Naive thymus-derived CD4-positive, alpha-beta T cell (primary cell): ENCODE measurements at regions of chr2 and their contacts with region 1.

Region 1: DNA sequence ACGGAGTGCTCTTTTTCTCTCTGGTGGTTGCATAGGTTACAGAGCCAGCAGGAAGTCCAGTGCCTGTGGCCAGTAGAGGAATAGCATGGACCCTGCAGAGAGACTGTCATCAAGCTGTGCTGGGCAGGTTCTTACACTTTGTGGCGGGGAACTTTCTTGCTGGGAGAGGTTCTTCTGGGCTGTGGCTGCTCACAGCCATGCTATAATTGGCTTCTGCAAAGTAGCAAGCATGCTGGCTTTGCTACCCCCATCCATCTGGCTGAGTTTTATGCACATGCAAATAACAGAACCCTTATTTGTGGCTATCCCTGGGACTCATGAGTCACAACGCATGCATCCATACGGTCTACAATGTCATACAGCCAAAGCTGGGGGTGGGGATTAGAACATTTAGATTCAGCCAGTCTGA is 68.9 kb downstream of the PLCL1 start:
- DNase-seq: no peak
- ATAC-seq: no peak
- H3K4me3 ChIP-seq: no peak overlapping the region
- H3K4me3 Mint-ChIP-seq: peak overlapping the region in 1 of 10 donors; percentile 33
- H3K27ac ChIP-seq: no peak overlapping the region
- H3K27ac Mint-ChIP-seq: peak overlapping the region in 3 of 9 donors; percentile 28 to 62 (median 47)
- H3K4me1 ChIP-seq: peaks cover 0 to 34% of the 10 kb centered on the region in 2 donors
- H3K4me1 Mint-ChIP-seq: peaks cover 29 to 92% (median 85%) of the 10 kb centered on the region in 7 donors
- H3K27me3 ChIP-seq: no peaks in the 10 kb centered on the region
- H3K27me3 Mint-ChIP-seq: no peaks in the 10 kb centered on the region

Region 2: DNA sequence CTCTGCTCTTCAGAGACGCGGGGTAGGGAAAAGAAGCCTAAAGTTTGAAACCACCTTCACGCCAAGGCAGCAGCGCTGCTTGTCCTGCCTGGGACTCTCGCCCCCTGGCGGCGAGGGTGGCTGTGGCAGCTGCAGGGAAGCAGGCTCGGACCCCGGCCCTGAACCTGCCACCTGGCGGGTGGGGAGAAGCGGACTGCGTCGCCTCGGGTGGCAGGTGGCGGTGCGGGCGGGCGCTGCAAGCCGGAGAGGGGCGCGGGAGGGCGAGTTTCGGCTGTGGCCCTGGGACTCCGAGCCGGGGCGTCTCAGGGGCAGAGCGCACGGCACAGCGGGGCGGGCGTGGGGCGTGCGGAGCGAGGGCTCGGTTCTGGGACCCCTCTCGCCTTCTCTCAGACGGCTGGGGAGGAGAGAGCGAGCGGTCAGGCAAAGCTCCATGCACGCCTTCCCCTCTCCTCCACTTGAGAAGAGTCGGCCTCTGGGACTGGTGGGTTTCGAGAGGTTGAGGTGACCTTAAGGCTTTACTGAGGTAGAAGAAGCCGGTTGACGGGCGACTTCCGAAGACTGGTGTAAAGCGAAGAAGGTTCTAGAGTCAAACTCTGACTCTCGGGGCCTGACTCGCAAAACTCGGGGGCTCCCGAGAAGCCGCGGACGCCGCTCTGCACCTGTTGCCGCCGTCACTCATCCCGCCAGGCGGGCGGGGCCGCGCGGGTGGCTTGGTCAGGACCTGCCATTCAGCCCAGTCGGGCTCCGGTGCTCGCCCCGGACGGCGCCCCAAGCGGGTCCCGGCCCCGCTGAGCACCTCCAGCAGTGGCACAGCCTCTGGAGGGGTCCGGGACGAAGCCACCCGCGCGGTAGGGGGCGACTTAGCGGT is 87.1 kb before region 1 on chr2:
- CTCF ChIA-PET with region 1: no interaction called
- POLR2A ChIA-PET with region 1: no interaction called
- intact Hi-C with region 1: no loop called
- DNase-seq: peak; percentile 21 to 68 (median 53)
- ATAC-seq: peak; percentile 77
- H3K4me3 ChIP-seq: peak overlapping the region; percentile 69
- H3K4me3 Mint-ChIP-seq: peak overlapping the region; percentile 57 to 86 (median 77)
- H3K27ac ChIP-seq: no peak overlapping the region
- H3K27ac Mint-ChIP-seq: peak overlapping the region in 2 of 9 donors; percentile 14 to 26
- H3K4me1 ChIP-seq: no peaks in the 10 kb centered on the region
- H3K4me1 Mint-ChIP-seq: peaks cover 0 to 8% (median 0%) of the 10 kb centered on the region in 7 donors
- H3K27me3 ChIP-seq: peaks cover 0 to 5% of the 10 kb centered on the region in 2 donors
- H3K27me3 Mint-ChIP-seq: peaks cover 6 to 50% (median 23%) of the 10 kb centered on the region in 5 donors

Region 3: GRCh38 chr2:197838036-197838435 is 35.3 kb before region 1 on chr2:
- CTCF ChIA-PET with region 1: no interaction called
- POLR2A ChIA-PET with region 1: interaction called, 5 read pairs
- intact Hi-C with region 1: loop called (anchors 1 kb)
- DNase-seq: peak in 7 of 9 donors; percentile 41 to 71 (median 59)
- ATAC-seq: peak; percentile 88
- H3K4me3 ChIP-seq: peak overlapping the region; percentile 31
- H3K4me3 Mint-ChIP-seq: peak overlapping the region; percentile 65 to 84 (median 80)
- H3K27ac ChIP-seq: peak overlapping the region; percentile 75
- H3K27ac Mint-ChIP-seq: peak overlapping the region; percentile 79 to 98 (median 94)
- H3K4me1 ChIP-seq: peaks cover 0 to 55% of the 10 kb centered on the region in 2 donors
- H3K4me1 Mint-ChIP-seq: peaks cover 28 to 88% (median 67%) of the 10 kb centered on the region in 7 donors
- H3K27me3 ChIP-seq: no peaks in the 10 kb centered on the region
- H3K27me3 Mint-ChIP-seq: no peaks in the 10 kb centered on the region

Region 4: GRCh38 chr2:197857476-197858107 is 15.7 kb before region 1 on chr2:
- CTCF ChIA-PET with region 1: interaction called, 5 read pairs
- POLR2A ChIA-PET with region 1: interaction called, 17 read pairs
- intact Hi-C with region 1: loop called in 1 of 2 experiments (anchors 1 kb)
- DNase-seq: no peak
- ATAC-seq: peak; percentile 57
- H3K4me3 ChIP-seq: peak overlapping the region; percentile 19
- H3K4me3 Mint-ChIP-seq: peak overlapping the region in 5 of 10 donors; percentile 3 to 43 (median 34)
- H3K27ac ChIP-seq: no peak overlapping the region
- H3K27ac Mint-ChIP-seq: peak overlapping the region in 5 of 9 donors; percentile 42 to 71 (median 59)
- H3K4me1 ChIP-seq: peaks cover 0 to 41% of the 10 kb centered on the region in 2 donors
- H3K4me1 Mint-ChIP-seq: peaks cover 0 to 96% (median 77%) of the 10 kb centered on the region in 7 donors
- H3K27me3 ChIP-seq: no peaks in the 10 kb centered on the region
- H3K27me3 Mint-ChIP-seq: no peaks in the 10 kb centered on the region

Region 5: GRCh38 chr2:197908990-197909776 is 35.9 kb after region 1 on chr2:
- CTCF ChIA-PET with region 1: interaction called, 3 read pairs
- POLR2A ChIA-PET with region 1: no interaction called
- intact Hi-C with region 1: loop called in 1 of 2 experiments (anchors 5 kb)
- DNase-seq: no peak
- ATAC-seq: no peak
- H3K4me3 ChIP-seq: no peak overlapping the region
- H3K4me3 Mint-ChIP-seq: no peak overlapping the region
- H3K27ac ChIP-seq: no peak overlapping the region
- H3K27ac Mint-ChIP-seq: peak overlapping the region in 1 of 9 donors; percentile 18
- H3K4me1 ChIP-seq: peaks cover 0 to 12% of the 10 kb centered on the region in 2 donors
- H3K4me1 Mint-ChIP-seq: peaks cover 4 to 77% (median 59%) of the 10 kb centered on the region in 7 donors
- H3K27me3 ChIP-seq: no peaks in the 10 kb centered on the region
- H3K27me3 Mint-ChIP-seq: peaks cover 0 to 48% (median 0%) of the 10 kb centered on the region in 5 donors

Region 6: GRCh38 chr2:198106621-198107385 is 233.5 kb after region 1 on chr2:
- CTCF ChIA-PET with region 1: no interaction called
- POLR2A ChIA-PET with region 1: no interaction called
- intact Hi-C with region 1: no loop called
- DNase-seq: no peak
- ATAC-seq: peak; percentile 82
- H3K4me3 ChIP-seq: no peak overlapping the region
- H3K4me3 Mint-ChIP-seq: no peak overlapping the region
- H3K27ac ChIP-seq: no peak overlapping the region
- H3K27ac Mint-ChIP-seq: no peak overlapping the region
- H3K4me1 ChIP-seq: no peaks in the 10 kb centered on the region
- H3K4me1 Mint-ChIP-seq: peaks cover 0 to 13% (median 5%) of the 10 kb centered on the region in 7 donors
- H3K27me3 ChIP-seq: no peaks in the 10 kb centered on the region
- H3K27me3 Mint-ChIP-seq: no peaks in the 10 kb centered on the region

Region 7: DNA sequence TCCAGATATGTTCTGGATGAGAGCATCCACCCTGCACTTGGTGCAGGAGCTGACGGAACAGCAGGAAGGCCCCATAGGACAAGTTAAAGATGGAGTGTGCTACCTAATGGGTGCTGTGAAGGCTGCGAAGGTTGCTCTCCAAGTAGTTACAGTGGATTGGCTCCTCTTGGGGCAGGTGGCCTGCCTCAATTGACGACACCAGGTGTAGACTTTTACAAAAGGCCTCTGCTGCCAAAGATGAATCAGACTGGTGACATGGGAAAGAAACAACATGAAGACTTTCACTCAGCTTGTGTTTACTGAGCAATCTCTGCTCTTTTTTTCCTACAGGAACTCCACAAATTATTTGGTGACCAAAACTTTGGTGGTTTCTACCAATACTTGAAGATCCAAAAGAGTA is 368.8 kb after region 1 on chr2:
- CTCF ChIA-PET with region 1: no interaction called
- POLR2A ChIA-PET with region 1: no interaction called
- intact Hi-C with region 1: no loop called
- DNase-seq: no peak
- ATAC-seq: no peak
- H3K4me3 ChIP-seq: no peak overlapping the region
- H3K4me3 Mint-ChIP-seq: no peak overlapping the region
- H3K27ac ChIP-seq: no peak overlapping the region
- H3K27ac Mint-ChIP-seq: no peak overlapping the region
- H3K4me1 ChIP-seq: no peaks in the 10 kb centered on the region
- H3K4me1 Mint-ChIP-seq: no peaks in the 10 kb centered on the region
- H3K27me3 ChIP-seq: no peaks in the 10 kb centered on the region
- H3K27me3 Mint-ChIP-seq: peaks cover 8 to 20% (median 11%) of the 10 kb centered on the region in 5 donors